SK-N-SH (cell line): ENCODE measurements at regions of chr5 and their contacts with region 1.

Region 1: DNA sequence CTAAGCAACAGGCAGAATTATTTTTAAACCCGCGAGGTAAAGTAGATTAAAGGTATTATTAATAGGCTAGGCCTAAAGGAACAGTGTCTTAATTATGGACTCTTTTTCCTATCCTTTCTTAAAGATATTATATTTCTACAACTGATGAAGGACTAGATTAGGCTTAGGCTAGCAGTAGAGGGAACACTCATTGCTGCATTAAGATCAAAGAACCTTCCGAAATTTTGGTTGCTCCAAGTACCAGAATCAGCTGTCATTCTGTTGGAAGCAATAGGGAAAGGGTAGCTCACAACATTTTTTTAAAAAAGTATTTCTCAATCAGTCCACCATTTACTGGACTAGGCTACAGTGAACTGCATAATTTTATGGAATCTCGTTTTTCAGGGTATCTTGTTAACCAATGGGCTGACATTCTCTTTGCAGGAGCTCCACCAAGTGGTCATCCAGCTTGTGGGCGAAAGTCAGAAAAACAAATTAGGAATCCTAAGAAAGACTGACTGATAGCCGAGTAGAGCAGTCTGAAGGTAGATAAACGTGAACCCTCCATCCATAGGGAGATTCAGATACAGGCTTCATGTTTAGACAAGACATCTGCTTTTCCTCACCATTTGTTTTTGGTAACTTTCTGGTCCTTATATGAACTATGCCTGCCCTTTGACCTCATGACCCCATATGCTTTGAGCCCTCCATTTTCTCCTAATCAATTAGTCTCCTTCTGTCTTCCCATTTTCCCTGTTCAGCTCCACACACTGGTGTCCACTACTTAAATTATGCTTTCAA is 103.6 kb upstream of the CHD1 start:
- DNase-seq: peak; percentile 46
- H3K4me3 ChIP-seq: no peak overlapping the region; a peak in 1 of 4 replicates
- H3K27ac ChIP-seq: no peak overlapping the region
- H3K4me1 ChIP-seq: 0 out of 4 replicates have a peak, but pooled peaks cover 0 to 5% of the 10 kb centered on the region in 2 experiments
- H3K27me3 ChIP-seq: no peaks in the 10 kb centered on the region
- CTCF ChIP-seq: peak; percentile 91
- EP300 ChIP-seq: no peak
- RAD21 ChIP-seq: peak; percentile 94

Region 2: DNA sequence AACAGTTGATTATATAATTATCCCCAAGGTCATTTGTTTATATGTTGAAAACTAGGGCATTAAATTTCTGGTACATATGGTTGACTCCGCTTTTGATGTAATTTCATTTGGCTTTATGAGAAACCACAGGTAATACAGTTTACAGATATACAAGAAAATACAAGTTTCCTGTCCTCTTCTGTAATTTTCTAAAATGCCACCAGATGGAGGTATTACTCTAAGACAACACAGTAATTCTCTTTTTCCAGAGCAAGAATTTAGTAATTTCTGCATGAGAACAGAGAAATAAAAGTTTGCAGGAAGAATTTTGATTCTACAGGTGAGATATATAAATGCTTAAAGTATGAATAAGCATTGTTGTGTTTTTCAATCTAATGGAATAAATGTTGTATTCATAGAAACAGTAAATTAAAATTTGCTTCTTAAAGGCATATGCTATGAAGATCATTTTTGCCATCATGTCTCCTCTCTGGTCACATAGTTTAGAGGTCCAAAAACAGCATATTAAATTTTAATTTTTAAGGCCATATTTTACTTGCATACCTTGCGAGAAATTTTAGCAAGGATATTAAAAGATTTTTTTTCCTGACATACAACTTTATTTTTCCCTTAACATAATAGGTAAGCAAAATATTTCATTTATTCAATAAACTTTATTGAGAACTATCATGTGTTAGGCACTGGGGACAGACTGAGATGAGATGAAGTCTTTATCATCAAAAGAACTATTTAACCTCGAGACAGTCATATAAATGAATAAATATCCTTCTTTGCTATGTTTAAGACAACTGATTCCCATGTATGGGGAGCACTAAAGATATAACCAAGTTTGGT is 126.3 kb before region 1 on chr5:
- CTCF ChIA-PET with region 1: interaction called, 33 read pairs
- POLR2A ChIA-PET with region 1: no interaction called
- DNase-seq: peak; percentile 22
- H3K4me3 ChIP-seq: no peak overlapping the region
- H3K27ac ChIP-seq: peak overlapping the region in 1 of 2 experiments; percentile 28; a peak in 2 of 4 replicates
- H3K4me1 ChIP-seq: peaks cover 0 to 25% of the 10 kb centered on the region in 2 experiments; a peak in 3 of 4 replicates
- H3K27me3 ChIP-seq: no peaks in the 10 kb centered on the region
- CTCF ChIP-seq: peak; percentile 84
- EP300 ChIP-seq: no peak
- RAD21 ChIP-seq: peak; percentile 79

Region 3: GRCh38 chr5:99019812-99020697 is 12.4 kb before region 1 on chr5:
- CTCF ChIA-PET with region 1: interaction called, 10 read pairs
- POLR2A ChIA-PET with region 1: no interaction called
- DNase-seq: no peak
- H3K4me3 ChIP-seq: no peak overlapping the region
- H3K27ac ChIP-seq: peak overlapping the region; percentile 60 to 82; a peak in 3 of 4 replicates
- H3K4me1 ChIP-seq: peaks cover 2 to 20% of the 10 kb centered on the region in 2 experiments; a peak in 2 of 4 replicates
- H3K27me3 ChIP-seq: no peaks in the 10 kb centered on the region
- CTCF ChIP-seq: no peak
- EP300 ChIP-seq: peak; percentile 65 to 94
- RAD21 ChIP-seq: no peak